ENCODE measurements at regions of chr6 and their contacts with region 1.

Region 1: GRCh38 chr6:110528101-110528929 is 51.9 kb upstream of the SLC22A16 start:
- DNase-seq: peak; percentile 20
- H3K4me3 Mint-ChIP-seq: no peak overlapping the region
- H3K27ac Mint-ChIP-seq: no peak overlapping the region
- H3K4me1 Mint-ChIP-seq: peaks cover 40% of the 10 kb centered on the region
- H3K27me3 Mint-ChIP-seq: no peaks in the 10 kb centered on the region

Region 2: DNA sequence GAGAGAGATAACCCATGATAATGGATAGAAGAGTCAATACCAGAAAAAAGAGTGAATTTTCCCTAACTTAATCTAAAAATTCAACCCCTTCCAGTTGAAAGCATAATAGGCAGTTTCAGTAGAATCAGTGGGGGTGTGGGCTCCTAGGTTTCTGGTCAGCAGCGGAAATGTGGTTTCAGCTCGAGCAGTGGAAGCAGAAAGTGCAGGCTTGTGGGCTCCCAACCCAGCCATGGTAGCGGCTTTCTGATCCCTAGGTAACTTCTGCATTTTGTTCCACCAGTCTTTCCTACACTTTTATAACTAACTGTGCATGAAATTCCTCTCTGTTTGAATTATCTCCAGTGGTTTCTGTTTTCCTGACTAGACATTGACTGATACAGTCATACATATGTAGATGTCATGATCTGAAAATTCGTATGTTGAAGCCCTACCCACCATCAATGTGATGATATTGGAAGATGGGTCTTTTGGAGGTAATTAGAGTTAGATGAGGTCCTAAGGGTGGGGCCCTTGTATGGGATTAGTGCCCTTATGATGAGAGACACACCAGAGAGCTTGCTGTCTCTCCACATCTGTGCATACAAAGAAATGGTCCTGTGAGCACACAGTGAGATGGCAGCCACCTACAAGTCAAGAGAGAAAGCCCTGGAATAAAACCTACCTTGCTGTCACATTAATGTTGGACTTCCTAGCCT is 106.4 kb before region 1 on chr6:
- intact Hi-C with region 1: no loop called
- DNase-seq: no peak
- H3K4me3 Mint-ChIP-seq: no peak overlapping the region
- H3K27ac Mint-ChIP-seq: no peak overlapping the region
- H3K4me1 Mint-ChIP-seq: peaks cover 6% of the 10 kb centered on the region
- H3K27me3 Mint-ChIP-seq: peaks cover 33% of the 10 kb centered on the region

Region 3: GRCh38 chr6:110566346-110567125 is 38.2 kb after region 1 on chr6:
- intact Hi-C with region 1: no loop called
- DNase-seq: no peak
- H3K4me3 Mint-ChIP-seq: no peak overlapping the region
- H3K27ac Mint-ChIP-seq: no peak overlapping the region
- H3K4me1 Mint-ChIP-seq: peaks cover 4% of the 10 kb centered on the region
- H3K27me3 Mint-ChIP-seq: no peaks in the 10 kb centered on the region

Region 4: GRCh38 chr6:110589865-110590513 is 61.7 kb after region 1 on chr6:
- intact Hi-C with region 1: loop called (anchors 2 kb)
- DNase-seq: no peak
- H3K4me3 Mint-ChIP-seq: no peak overlapping the region
- H3K27ac Mint-ChIP-seq: peak overlapping the region; percentile 78
- H3K4me1 Mint-ChIP-seq: peaks cover 32% of the 10 kb centered on the region
- H3K27me3 Mint-ChIP-seq: peaks cover 4% of the 10 kb centered on the region

Region 5: DNA sequence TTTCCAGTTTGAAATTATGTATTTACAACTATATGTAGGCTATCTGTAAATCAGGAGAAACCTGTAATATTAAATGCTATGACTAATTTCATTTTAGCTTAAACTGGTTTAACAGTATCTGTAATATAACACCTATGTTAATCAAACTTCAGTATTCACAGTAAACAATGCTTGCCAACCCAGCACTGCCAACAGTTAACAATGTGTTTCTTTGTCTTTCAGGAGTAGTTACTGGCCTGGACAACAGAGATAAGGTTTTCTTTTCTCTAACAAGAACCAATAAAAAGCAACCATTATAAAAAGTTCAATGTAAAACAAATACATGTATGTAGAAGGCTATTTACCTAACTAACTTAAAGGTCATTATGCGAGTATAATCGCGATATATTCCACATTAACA is 128.2 kb after region 1 on chr6:
- intact Hi-C with region 1: no loop called
- DNase-seq: no peak
- H3K4me3 Mint-ChIP-seq: no peak overlapping the region
- H3K27ac Mint-ChIP-seq: no peak overlapping the region
- H3K4me1 Mint-ChIP-seq: peaks cover 22% of the 10 kb centered on the region
- H3K27me3 Mint-ChIP-seq: no peaks in the 10 kb centered on the region

Region 6: GRCh38 chr6:110682460-110682853 is 154.1 kb after region 1 on chr6:
- intact Hi-C with region 1: loop called (anchors 2 kb)
- DNase-seq: peak; percentile 40
- H3K4me3 Mint-ChIP-seq: no peak overlapping the region
- H3K27ac Mint-ChIP-seq: peak overlapping the region; percentile 62
- H3K4me1 Mint-ChIP-seq: peaks cover 30% of the 10 kb centered on the region
- H3K27me3 Mint-ChIP-seq: no peaks in the 10 kb centered on the region

Region 7: GRCh38 chr6:110873981-110874879 is 345.9 kb after region 1 on chr6 and contains the start of gene AMD1:
- intact Hi-C with region 1: loop called (anchors 5 kb)
- DNase-seq: peak; percentile 94
- H3K4me3 Mint-ChIP-seq: peak within 1 kb of the TSS; percentile 95
- H3K27ac Mint-ChIP-seq: peak within 1 kb of the TSS; percentile 98
- H3K4me1 Mint-ChIP-seq: peaks cover 26% of the 10 kb centered on the region
- H3K27me3 Mint-ChIP-seq: no peaks in the 10 kb centered on the region
- total RNA-seq, gene AMD1: 111 TPM in 2 replicates

Region 8: GRCh38 chr6:110949679-110950285 is 421.5 kb after region 1 on chr6:
- intact Hi-C with region 1: loop called (anchors 1 kb)
- DNase-seq: no peak
- H3K4me3 Mint-ChIP-seq: no peak overlapping the region
- H3K27ac Mint-ChIP-seq: no peak overlapping the region
- H3K4me1 Mint-ChIP-seq: peaks cover 12% of the 10 kb centered on the region
- H3K27me3 Mint-ChIP-seq: peaks cover 2% of the 10 kb centered on the region

Region 9: GRCh38 chr6:110999634-111000270 is 471.4 kb after region 1 on chr6:
- intact Hi-C with region 1: loop called (anchors 5 kb)
- DNase-seq: no peak
- H3K4me3 Mint-ChIP-seq: no peak overlapping the region
- H3K27ac Mint-ChIP-seq: no peak overlapping the region
- H3K4me1 Mint-ChIP-seq: peaks cover 2% of the 10 kb centered on the region
- H3K27me3 Mint-ChIP-seq: no peaks in the 10 kb centered on the region

Region 10: GRCh38 chr6:111210194-111210728 is 681.9 kb after region 1 on chr6:
- intact Hi-C with region 1: loop called (anchors 10 kb)
- DNase-seq: no peak
- H3K4me3 Mint-ChIP-seq: no peak overlapping the region
- H3K27ac Mint-ChIP-seq: no peak overlapping the region
- H3K4me1 Mint-ChIP-seq: no peaks in the 10 kb centered on the region
- H3K27me3 Mint-ChIP-seq: no peaks in the 10 kb centered on the region

Measured in activated T-helper 2 cell treated with anti-CD3 and anti-CD28 coated beads, Interferon-gamma antibody, Interleukin-2, Interleukin-4, amounts not matched to agents 10 μg/mL and 5 μg/mL and 100 μg/mL, durations not matched to agents 14 hours and 24 hours and 36 hours (primary cell).